Tibial artery (tissue), 4 donors: ENCODE measurements at regions of chr14 and their contacts with region 1.

Region 1: DNA sequence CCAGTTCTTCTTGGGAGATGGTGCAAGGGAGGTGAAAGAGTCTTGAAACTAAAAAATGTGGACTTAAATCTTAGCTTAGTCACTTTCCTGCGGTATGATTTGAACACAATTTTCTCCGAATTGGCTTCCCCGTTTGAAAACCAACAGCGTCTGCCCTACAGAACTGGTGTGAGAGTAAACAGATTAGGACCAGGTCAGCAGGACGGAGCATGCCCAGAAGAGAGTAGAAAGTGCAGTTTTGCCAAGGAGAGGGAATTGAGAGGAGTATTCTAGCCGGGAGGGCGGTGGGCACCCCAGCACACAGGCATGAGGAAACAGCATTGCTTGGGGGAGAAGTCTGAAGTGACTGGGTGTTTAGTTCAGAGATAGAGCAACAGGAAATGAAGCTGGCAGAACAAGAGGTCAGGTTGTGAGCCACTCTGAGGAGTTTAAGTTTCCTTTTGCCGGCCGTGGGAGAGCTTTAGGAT is 927.1 kb downstream of the VRK1 start:
- DNase-seq: no peak
- H3K4me3 ChIP-seq: no peak overlapping the region
- H3K27ac ChIP-seq: no peak overlapping the region
- H3K4me1 ChIP-seq: no peaks in the 10 kb centered on the region
- H3K27me3 ChIP-seq: no peaks in the 10 kb centered on the region
- CTCF ChIP-seq: no peak

Region 2: DNA sequence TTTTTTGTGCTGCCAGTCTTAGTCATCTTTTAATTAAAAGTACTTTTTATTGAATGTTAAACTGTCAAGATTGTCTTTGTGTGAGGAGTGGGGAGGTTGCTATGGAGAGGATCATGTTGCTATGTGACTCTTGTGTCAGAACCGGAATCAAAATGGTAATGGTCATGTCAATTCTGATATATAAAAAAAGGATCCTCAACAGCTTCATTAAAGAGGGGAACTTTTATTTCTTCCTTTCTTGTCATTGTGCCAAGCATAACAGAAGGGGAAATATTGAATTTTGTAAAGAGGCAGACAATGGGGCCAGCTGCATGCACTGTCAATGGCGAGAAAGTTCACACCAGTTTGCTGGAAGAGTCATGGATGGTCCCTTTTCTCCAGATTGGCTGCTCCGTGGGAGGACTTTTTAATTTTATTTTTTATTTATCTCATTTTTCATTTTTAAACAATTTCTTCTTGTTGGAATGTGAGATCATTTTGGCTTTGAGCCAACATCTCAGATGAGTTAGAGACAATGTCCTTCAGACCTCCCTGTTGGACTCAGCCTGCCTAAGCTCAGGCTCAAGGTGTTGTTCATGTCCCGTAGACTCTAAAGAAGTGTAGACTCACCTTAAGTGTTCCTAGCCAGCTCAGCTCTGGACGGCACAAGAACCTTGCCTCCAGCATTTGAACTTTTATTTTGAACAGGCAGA is 362.2 kb before region 1 on chr14:
- intact Hi-C with region 1: loop called (anchors 10 kb)
- DNase-seq: no peak
- H3K4me3 ChIP-seq: no peak overlapping the region
- H3K27ac ChIP-seq: no peak overlapping the region
- H3K4me1 ChIP-seq: no peaks in the 10 kb centered on the region
- H3K27me3 ChIP-seq: no peaks in the 10 kb centered on the region
- CTCF ChIP-seq: no peak

Region 3: DNA sequence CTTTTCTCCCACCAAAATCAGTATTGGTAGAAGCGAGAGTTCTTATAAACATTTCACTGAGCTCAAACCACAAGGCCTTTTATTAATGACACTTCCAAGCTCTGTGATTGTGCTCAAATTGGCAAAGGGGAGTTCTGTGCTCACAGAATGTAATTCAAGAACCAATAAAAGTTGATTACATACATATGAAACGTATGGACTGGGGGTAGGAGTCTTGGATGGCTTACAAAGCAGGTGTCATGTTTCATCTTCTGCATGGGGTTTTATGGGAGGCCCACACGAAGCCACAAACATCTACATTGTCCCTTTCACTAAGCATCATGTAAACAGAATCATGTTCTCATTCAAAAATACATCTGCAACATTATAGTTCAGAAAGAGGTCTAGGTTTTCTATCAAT is 98.8 kb before region 1 on chr14:
- intact Hi-C with region 1: no loop called
- DNase-seq: no peak
- H3K4me3 ChIP-seq: no peak overlapping the region
- H3K27ac ChIP-seq: no peak overlapping the region
- H3K4me1 ChIP-seq: no peaks in the 10 kb centered on the region
- H3K27me3 ChIP-seq: no peaks in the 10 kb centered on the region
- CTCF ChIP-seq: no peak

Region 4: DNA sequence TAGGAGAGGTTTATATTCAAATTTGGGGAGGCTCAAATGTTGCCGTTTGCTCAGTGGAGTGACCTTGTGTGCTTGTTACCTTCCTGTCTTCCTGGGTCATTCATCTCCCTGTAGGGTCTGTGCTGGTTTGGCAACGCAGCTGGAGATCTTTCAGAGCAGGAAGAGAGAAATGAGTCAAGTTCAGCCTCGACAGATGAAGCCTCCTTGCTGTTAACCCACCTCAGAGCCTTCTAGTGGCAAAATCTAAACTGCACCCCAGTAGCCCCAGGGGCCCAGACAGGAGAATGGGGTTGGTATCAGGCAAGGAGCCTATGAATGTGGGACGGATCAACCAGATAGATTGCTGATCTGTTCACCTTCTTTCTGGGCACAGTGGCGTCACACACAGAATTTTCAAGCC is 72.2 kb after region 1 on chr14:
- intact Hi-C with region 1: no loop called
- DNase-seq: no peak
- H3K4me3 ChIP-seq: no peak overlapping the region
- H3K27ac ChIP-seq: no peak overlapping the region
- H3K4me1 ChIP-seq: no peaks in the 10 kb centered on the region
- H3K27me3 ChIP-seq: peaks cover 0 to 3% of the 10 kb centered on the region in 2 donors
- CTCF ChIP-seq: no peak